ENCODE measurements at regions of chr5 and their contacts with region 1.

Region 1: DNA sequence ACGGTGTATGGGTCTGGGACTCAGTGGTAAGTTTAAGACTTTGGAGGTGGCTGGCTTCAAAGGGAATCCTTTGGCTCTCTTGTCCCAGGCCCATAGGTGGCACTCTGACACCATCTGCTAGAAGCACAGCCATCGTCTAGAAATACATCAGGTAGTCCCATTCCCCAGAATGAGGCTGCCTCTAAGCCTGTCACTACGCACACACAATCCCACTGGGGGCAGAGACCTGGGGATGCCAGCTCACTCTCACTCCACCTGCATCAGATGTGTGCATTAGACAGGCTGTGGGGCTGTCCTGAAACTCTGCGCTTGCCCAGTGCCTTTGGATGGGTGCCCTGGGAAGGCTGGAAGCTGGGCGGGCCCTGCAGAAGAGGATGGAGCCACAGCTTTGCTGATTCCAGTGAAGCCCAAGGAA is 127.5 kb upstream of the PANK3 start:
- DNase-seq: peak; percentile 23
- H3K4me3 ChIP-seq: no peak overlapping the region
- H3K27ac ChIP-seq: no peak overlapping the region
- H3K4me1 ChIP-seq: no peaks in the 10 kb centered on the region
- H3K27me3 ChIP-seq: no peaks in the 10 kb centered on the region
- CTCF ChIP-seq: peak; percentile 48 to 86

Region 2: DNA sequence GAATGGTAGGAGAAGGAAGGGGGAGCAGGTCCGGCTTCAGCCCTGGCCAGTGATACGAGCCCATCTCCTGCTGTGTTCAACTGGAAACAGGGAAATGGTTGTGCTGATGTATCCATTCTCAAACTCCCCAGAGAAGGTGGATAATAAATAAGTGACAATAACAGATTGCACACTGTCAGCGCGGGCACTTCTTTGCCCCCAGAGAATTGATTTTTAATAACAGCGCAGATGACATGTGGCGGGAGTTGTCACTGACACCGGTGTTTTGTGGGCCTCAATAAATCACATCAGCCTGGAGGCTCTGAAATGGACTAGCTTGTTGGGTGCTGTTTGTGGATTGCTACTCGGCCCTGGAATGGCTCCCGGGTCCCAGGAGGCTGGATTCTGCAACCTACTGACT is 13.9 kb after region 1 on chr5:
- CTCF ChIA-PET with region 1: no interaction called
- dilution Hi-C with region 1: no loop called
- in situ Hi-C with region 1: no loop called
- intact Hi-C with region 1: no loop called
- DNase-seq: no peak
- H3K4me3 ChIP-seq: no peak overlapping the region
- H3K27ac ChIP-seq: no peak overlapping the region
- H3K4me1 ChIP-seq: no peaks in the 10 kb centered on the region
- H3K27me3 ChIP-seq: no peaks in the 10 kb centered on the region
- CTCF ChIP-seq: no peak

Region 3: DNA sequence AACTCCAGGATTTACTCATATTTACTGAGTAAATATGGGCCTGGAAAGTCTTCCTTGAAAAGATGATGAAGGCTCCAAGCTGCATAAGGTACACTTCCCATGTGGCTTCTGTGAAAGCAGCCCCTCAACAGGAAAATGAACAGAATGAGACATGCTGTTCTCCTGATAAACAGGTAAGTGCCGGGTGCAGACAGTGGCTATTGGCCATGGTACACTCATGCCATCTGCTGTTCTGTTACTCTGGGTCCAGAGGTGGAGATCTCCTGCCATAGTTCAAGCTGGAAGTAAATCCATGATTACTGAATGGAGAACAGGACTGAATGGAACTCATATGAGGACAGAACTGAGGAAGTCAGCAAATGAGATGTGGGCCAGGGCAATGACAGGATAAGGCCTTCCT is 490.7 kb after region 1 on chr5:
- CTCF ChIA-PET with region 1: no interaction called
- dilution Hi-C with region 1: no loop called
- in situ Hi-C with region 1: no loop called
- intact Hi-C with region 1: loop called (anchors 10 kb)
- DNase-seq: peak; percentile 24
- H3K4me3 ChIP-seq: no peak overlapping the region
- H3K27ac ChIP-seq: no peak overlapping the region
- H3K4me1 ChIP-seq: peaks cover 14% of the 10 kb centered on the region
- H3K27me3 ChIP-seq: no peaks in the 10 kb centered on the region
- CTCF ChIP-seq: peak; percentile 53 to 80

Region 4: GRCh38 chr5:169577951-169578350 is 871.3 kb after region 1 on chr5:
- CTCF ChIA-PET with region 1: no interaction called
- dilution Hi-C with region 1: no loop called
- in situ Hi-C with region 1: no loop called
- intact Hi-C with region 1: loop called (anchors 2 kb)
- DNase-seq: peak; percentile 32
- H3K4me3 ChIP-seq: no peak overlapping the region
- H3K27ac ChIP-seq: no peak overlapping the region
- H3K4me1 ChIP-seq: peaks cover 17% of the 10 kb centered on the region
- H3K27me3 ChIP-seq: no peaks in the 10 kb centered on the region
- CTCF ChIP-seq: peak; percentile 52 to 64